WTC11 (cell line): ENCODE measurements at regions of chr4 and their contacts with region 1.

Region 1: DNA sequence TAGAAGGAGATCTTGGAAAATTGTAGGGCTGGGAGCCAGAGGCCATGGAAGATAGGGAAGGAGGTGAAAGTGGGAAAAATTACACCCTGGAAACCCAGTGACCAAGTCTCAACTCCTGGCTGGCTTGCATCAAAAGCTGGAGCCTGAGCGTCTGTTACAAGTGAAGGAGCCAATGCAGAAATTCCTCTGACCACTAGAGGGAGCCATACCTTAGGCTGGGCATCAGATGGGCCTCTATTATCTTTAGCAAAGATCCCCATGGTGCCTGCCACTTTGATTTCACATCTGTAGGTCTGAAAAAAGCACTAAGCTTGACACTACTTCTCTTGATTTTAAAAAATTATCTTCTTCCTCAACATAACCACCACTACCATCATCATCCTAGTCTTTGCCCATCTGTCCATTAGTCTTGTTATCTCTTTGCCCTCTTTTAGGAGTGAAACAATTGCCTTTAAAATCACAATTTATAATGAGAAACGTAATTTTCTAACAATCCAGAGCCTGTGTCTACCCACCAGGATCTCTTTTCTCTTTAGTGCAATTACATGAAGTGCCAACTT is 62.9 kb downstream of the ANAPC4 start:
- DNase-seq: peak; percentile 67
- ATAC-seq: peak; percentile 68
- H3K4me3 Mint-ChIP-seq: no peak overlapping the region
- H3K27ac Mint-ChIP-seq: no peak overlapping the region
- H3K4me1 Mint-ChIP-seq: 0 out of 2 replicates have a peak, but pooled peaks cover 5% of the 10 kb centered on the region
- H3K27me3 Mint-ChIP-seq: no peaks in the 10 kb centered on the region
- CTCF ChIP-seq: peak; percentile 89

Region 2: GRCh38 chr4:25202431-25202830 is 237.6 kb before region 1 on chr4:
- CTCF ChIA-PET with region 1: no interaction called
- POLR2A ChIA-PET with region 1: no interaction called
- DNase-seq: no peak
- ATAC-seq: no peak
- H3K4me3 Mint-ChIP-seq: no peak overlapping the region
- H3K27ac Mint-ChIP-seq: no peak overlapping the region
- H3K4me1 Mint-ChIP-seq: no peaks in the 10 kb centered on the region
- H3K27me3 Mint-ChIP-seq: no peaks in the 10 kb centered on the region
- CTCF ChIP-seq: no peak

Region 3: DNA sequence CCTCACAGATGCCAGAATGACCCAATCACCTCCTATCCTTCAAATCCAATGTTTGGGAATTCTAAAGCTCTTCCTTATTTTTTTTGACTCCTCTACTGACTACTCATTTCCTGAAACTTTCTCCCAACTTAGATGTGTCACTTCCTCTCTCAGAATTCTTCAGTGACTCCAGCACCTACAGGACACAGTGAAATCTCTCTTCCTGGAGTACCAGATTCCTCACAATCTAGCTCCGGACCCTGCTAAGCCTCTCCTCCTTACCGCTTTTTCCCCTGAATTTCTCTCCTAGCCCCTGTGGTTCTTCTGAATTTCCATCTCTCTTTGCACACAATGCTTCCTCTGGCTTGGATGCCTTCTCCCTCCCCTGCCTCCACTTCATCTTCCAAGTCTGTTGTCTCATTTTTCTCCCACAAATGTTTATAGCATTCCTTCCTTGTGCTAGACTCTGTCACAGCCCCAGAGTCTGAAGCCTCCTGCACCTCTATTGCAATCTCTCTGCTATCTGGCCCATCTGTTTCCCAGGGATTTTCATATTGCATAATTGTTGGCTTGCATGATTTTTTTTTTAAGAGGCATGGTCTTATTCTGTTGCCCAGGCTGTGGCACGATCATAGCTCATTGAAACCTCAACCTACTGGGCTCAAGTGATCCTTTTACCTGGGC is 17.2 kb after region 1 on chr4:
- CTCF ChIA-PET with region 1: interaction called, 15 read pairs
- POLR2A ChIA-PET with region 1: no interaction called
- DNase-seq: no peak
- ATAC-seq: no peak
- H3K4me3 Mint-ChIP-seq: no peak overlapping the region
- H3K27ac Mint-ChIP-seq: no peak overlapping the region
- H3K4me1 Mint-ChIP-seq: peaks cover 3% of the 10 kb centered on the region; the same call in 1 of the 2 replicates
- H3K27me3 Mint-ChIP-seq: no peaks in the 10 kb centered on the region
- CTCF ChIP-seq: no peak

Region 4: DNA sequence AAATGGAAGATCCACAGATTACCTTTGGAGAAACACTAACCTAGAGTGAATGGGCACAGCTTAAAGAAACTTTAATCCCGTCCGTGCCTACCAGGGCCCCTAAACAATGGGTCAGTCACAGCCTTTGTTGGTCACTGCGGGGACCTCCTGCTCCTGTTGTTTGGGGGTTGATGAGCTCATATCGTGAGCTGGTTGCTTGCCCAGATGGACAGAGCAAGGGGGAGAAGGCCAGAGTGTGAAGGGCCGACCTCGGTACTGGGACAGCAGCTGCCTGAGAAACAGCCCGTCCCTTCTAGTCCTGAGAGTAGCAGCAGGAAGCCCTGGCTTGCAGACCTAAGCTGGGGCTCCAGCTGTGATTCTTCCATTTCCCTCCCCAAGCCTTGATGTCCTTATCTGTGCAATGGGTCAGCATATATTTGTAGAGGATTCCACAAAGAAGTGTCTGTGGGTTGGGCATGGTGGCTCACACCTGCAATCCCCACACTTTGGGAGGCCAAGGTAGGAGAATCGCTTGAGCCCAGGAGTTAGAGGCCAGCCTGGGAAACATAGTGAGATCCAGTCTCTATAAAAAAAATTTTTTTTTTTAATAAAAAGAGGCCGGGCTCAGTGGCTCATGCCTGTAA is 146.0 kb after region 1 on chr4:
- CTCF ChIA-PET with region 1: interaction called, 14 read pairs
- POLR2A ChIA-PET with region 1: no interaction called
- DNase-seq: no peak
- ATAC-seq: peak; percentile 25
- H3K4me3 Mint-ChIP-seq: no peak overlapping the region
- H3K27ac Mint-ChIP-seq: peak overlapping the region; percentile 29; the same call in 1 of the 2 replicates
- H3K4me1 Mint-ChIP-seq: peaks cover 32% of the 10 kb centered on the region
- H3K27me3 Mint-ChIP-seq: no peaks in the 10 kb centered on the region
- CTCF ChIP-seq: no peak

Region 5: DNA sequence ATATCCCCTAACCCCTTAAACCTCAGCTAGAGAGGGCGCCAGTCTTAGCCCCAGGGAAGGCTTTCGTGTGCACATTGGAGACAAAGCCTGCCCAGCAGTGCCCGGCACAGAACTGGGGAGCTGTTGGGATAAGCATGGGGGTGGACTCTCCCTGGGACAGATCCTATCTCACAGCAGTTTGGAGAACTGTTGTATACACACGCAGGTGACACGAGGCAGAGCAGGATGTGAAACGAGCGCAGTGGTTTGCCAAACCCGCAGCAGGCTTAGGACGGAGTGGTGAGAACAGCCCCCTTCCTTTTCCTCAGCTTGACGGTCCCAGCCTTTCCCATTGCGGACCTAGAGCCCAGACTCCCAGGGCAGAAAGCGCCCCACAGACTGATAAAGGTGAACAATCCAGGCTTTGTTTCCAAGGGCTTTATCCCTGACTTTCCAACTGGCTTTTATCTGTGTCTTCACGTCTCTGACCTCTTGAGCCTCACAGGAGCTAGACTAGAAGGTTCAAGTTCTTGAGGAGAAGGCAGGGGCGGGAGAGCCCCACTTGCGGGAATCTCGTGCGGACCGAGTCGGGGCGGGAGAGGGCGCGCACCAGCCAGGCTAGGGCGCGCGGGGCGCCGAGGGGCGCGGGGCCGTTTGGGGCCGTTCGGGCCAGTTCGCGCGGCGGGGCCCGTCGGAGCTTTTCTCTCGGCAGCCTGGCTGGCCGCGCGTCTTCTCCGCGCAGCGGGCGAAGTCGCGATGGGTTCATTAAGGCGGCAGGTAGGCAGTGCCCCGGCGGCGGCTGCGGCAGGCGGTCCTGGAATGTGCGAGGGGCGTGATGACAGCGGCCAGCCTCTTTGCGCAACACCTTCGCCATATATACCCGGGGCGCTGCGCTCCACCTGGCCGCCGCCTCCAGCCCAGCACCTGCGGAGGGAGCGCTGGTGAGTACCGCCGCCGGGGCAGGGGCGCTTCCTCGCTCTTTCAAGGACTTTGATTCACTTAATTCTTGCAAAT is 215.3 kb after region 1 on chr4 and contains the start of gene SLC34A2:
- CTCF ChIA-PET with region 1: interaction called, 15 read pairs
- POLR2A ChIA-PET with region 1: no interaction called
- DNase-seq: peak; percentile 85
- ATAC-seq: peak; percentile 71
- H3K4me3 Mint-ChIP-seq: peak within 1 kb of the TSS; percentile 66
- H3K27ac Mint-ChIP-seq: no peak within 1 kb of the TSS
- H3K4me1 Mint-ChIP-seq: peaks cover 26% of the 10 kb centered on the region
- H3K27me3 Mint-ChIP-seq: peaks cover 47% of the 10 kb centered on the region
- CTCF ChIP-seq: no peak
- total RNA-seq, gene SLC34A2: 1.7 to 1.9 TPM (median 1.8 TPM) in 3 replicates

Region 6: GRCh38 chr4:25767877-25768725 is 328.1 kb after region 1 on chr4:
- CTCF ChIA-PET with region 1: interaction called, 73 read pairs
- POLR2A ChIA-PET with region 1: interaction called, 5 read pairs
- DNase-seq: peak; percentile 62
- ATAC-seq: peak; percentile 75
- H3K4me3 Mint-ChIP-seq: no peak overlapping the region
- H3K27ac Mint-ChIP-seq: no peak overlapping the region
- H3K4me1 Mint-ChIP-seq: no peaks in the 10 kb centered on the region
- H3K27me3 Mint-ChIP-seq: no peaks in the 10 kb centered on the region
- CTCF ChIP-seq: no peak